ENCODE measurements at regions of chr12 and their contacts with region 1.

Region 1: DNA sequence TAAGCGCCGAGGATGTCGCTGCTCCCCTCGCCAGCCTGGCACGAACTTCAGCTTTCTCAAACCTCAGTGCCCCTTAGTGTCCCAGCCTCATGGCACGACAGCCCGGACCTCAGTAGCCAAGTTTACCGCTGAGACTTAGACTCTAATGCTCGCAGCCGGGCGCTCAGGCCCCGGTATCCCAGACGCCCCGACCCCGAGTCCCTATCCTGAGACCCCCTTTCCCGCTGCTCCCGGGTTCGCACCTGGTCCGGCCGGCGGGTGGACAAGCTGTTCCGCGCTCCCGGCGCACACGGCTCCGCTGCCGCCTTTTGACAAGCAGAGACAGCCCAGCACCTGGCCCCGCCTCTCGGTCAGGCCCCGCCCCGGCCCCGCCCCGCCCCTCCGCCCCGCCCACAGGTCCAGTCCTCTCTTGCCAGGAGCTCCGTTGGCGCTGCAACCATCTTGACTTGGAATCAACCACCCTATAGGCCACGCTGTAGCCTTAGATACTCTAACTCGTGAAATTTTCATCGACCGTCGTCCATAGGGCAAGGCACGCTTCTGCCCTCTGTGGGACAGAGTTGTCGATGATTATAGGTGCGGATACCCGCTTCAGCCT is at the start of gene VDR:
- DNase-seq: peak; percentile 54 to 87
- H3K4me3 ChIP-seq: peak within 1 kb of the TSS; percentile 58 to 71 (median 68)
- H3K27ac ChIP-seq: peak within 1 kb of the TSS; percentile 94
- H3K4me1 ChIP-seq: peaks cover 0 to 9% (median 5%) of the 10 kb centered on the region in 4 experiments; a peak in 4 of 7 replicates
- H3K27me3 ChIP-seq: peaks cover 8 to 61% (median 42%) of the 10 kb centered on the region in 4 experiments
- CTCF ChIP-seq: peak; percentile 13 to 56 (median 42); a peak in 3 of 4 replicates
- EP300 ChIP-seq: peak in 1 of 2 experiments; percentile 96; a peak in 1 of 3 replicates
- POLR2A ChIP-seq: peak; percentile 69 to 71; a peak in 2 of 3 replicates
- RAD21 ChIP-seq: no peak; a peak in 1 of 4 replicates
- total RNA-seq, gene VDR: 0.34 and 0.65 TPM in 2 replicates

Region 2: GRCh38 chr12:47767216-47767724 is 137.5 kb before region 1 on chr12:
- CTCF ChIA-PET with region 1: no interaction called
- POLR2A ChIA-PET with region 1: no interaction called
- DNase-seq: peak in 1 of 2 experiments; percentile 77
- H3K4me3 ChIP-seq: no peak overlapping the region
- H3K27ac ChIP-seq: no peak overlapping the region
- H3K4me1 ChIP-seq: peaks cover 3 to 12% (median 9%) of the 10 kb centered on the region in 4 experiments; a peak in 5 of 7 replicates
- H3K27me3 ChIP-seq: no peaks in the 10 kb centered on the region; a peak in 1 of 7 replicates
- CTCF ChIP-seq: peak; percentile 63 to 89 (median 77)
- EP300 ChIP-seq: no peak
- POLR2A ChIP-seq: no peak
- RAD21 ChIP-seq: peak; percentile 83 to 87

Region 3: DNA sequence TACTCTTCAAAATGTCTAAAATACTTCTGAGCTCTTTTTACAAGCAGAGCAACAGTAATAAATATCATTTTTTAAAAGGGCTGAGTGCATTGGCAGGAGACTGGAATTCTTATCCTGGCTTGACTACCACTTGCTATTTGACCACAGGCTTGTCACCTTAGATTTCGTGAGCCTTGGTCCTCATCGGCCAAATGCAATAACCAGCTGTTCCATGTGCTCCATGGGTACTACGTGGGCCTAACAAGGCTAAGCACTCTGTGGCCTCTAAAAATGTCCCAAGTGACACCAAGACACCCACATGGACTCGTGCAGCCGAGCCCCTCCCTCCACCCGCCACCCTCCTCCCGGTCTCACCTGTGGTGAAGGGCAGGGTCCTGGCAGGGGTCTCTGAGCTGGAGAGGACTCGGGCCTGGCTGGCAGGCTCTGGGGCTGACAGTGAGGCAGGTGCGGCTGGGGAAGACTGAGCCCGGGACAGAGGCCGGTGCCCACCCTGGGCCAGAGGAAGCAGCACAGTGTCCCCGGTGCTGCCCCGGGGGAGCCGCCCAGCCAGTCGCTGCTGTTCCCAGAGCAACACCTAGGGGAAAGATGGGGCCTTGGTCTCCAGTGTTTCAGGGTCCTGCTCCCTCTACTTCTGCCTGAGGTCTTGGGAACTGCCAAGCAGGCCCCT is 111.7 kb before region 1 on chr12:
- CTCF ChIA-PET with region 1: no interaction called
- POLR2A ChIA-PET with region 1: no interaction called
- DNase-seq: no peak
- H3K4me3 ChIP-seq: no peak overlapping the region
- H3K27ac ChIP-seq: no peak overlapping the region
- H3K4me1 ChIP-seq: peaks cover 0 to 4% (median under 1%) of the 10 kb centered on the region in 4 experiments; a peak in 3 of 7 replicates
- H3K27me3 ChIP-seq: no peaks in the 10 kb centered on the region
- CTCF ChIP-seq: no peak
- EP300 ChIP-seq: no peak
- POLR2A ChIP-seq: no peak
- RAD21 ChIP-seq: no peak

Region 4: GRCh38 chr12:47882781-47883546 is 21.8 kb before region 1 on chr12:
- CTCF ChIA-PET with region 1: interaction called, 37 read pairs
- POLR2A ChIA-PET with region 1: interaction called, 9 read pairs
- DNase-seq: no peak
- H3K4me3 ChIP-seq: no peak overlapping the region
- H3K27ac ChIP-seq: no peak overlapping the region
- H3K4me1 ChIP-seq: peaks cover 0 to 5% (median 1%) of the 10 kb centered on the region in 4 experiments; a peak in 4 of 7 replicates
- H3K27me3 ChIP-seq: no peaks in the 10 kb centered on the region; a peak in 1 of 7 replicates
- CTCF ChIP-seq: no peak
- EP300 ChIP-seq: no peak
- POLR2A ChIP-seq: no peak
- RAD21 ChIP-seq: no peak

Region 5: GRCh38 chr12:47894068-47894467 is 10.7 kb before region 1 on chr12:
- CTCF ChIA-PET with region 1: interaction called, 37 read pairs
- POLR2A ChIA-PET with region 1: interaction called, 6 read pairs
- DNase-seq: no peak
- H3K4me3 ChIP-seq: no peak overlapping the region
- H3K27ac ChIP-seq: no peak overlapping the region
- H3K4me1 ChIP-seq: no peaks in the 10 kb centered on the region
- H3K27me3 ChIP-seq: peaks cover 0 to 6% (median 3%) of the 10 kb centered on the region in 4 experiments; a peak in 3 of 7 replicates
- CTCF ChIP-seq: no peak
- EP300 ChIP-seq: no peak
- POLR2A ChIP-seq: no peak
- RAD21 ChIP-seq: no peak

Region 6: DNA sequence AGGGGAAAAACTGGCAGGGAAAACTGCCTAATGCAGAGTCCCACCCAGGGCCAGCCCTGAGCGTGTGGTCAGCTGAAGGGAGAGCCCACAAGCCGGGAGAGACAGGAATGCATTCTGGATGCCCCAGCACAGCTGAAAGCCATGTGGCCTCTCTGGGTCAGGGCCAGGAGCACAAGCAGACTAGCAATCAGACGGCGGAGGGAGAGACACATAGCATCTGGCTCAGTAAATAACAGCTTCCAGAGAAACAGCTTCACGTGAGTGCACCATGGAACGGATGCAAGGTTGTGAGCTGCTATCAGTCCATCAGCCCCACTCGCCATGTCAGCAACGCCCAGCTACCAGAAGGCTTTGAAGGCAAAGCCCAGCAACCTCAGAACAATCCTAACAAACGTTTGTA is 30.4 kb after region 1 on chr12:
- CTCF ChIA-PET with region 1: interaction called, 13 read pairs
- POLR2A ChIA-PET with region 1: interaction called, 3 read pairs
- DNase-seq: no peak
- H3K4me3 ChIP-seq: no peak overlapping the region
- H3K27ac ChIP-seq: no peak overlapping the region
- H3K4me1 ChIP-seq: no peaks in the 10 kb centered on the region
- H3K27me3 ChIP-seq: peaks cover 0 to 6% (median 0%) of the 10 kb centered on the region in 4 experiments; a peak in 1 of 7 replicates
- CTCF ChIP-seq: no peak
- EP300 ChIP-seq: no peak
- POLR2A ChIP-seq: no peak
- RAD21 ChIP-seq: no peak

Measured in H1 (cell line).